WTC11 (cell line): ENCODE measurements at regions of chr2 and their contacts with region 1.

Region 1: GRCh38 chr2:170873035-170873692 is 55.9 kb upstream of the GORASP2 start:
- DNase-seq: peak; percentile 89
- ATAC-seq: peak; percentile 95
- H3K4me3 Mint-ChIP-seq: peak overlapping the region; percentile 52
- H3K27ac Mint-ChIP-seq: no peak overlapping the region
- H3K4me1 Mint-ChIP-seq: peaks cover 8% of the 10 kb centered on the region
- H3K27me3 Mint-ChIP-seq: no peaks in the 10 kb centered on the region
- CTCF ChIP-seq: peak; percentile 87; the same call in 1 of the 2 replicates

Region 2: GRCh38 chr2:170822290-170823087 is 50.7 kb before region 1 on chr2:
- CTCF ChIA-PET with region 1: interaction called, 12 read pairs
- POLR2A ChIA-PET with region 1: no interaction called
- DNase-seq: peak; percentile 69
- ATAC-seq: peak; percentile 5
- H3K4me3 Mint-ChIP-seq: peak overlapping the region; percentile 84
- H3K27ac Mint-ChIP-seq: no peak overlapping the region
- H3K4me1 Mint-ChIP-seq: peaks cover 49% of the 10 kb centered on the region
- H3K27me3 Mint-ChIP-seq: peaks cover 98% of the 10 kb centered on the region
- CTCF ChIP-seq: peak; percentile 18; the same call in 1 of the 2 replicates

Region 3: DNA sequence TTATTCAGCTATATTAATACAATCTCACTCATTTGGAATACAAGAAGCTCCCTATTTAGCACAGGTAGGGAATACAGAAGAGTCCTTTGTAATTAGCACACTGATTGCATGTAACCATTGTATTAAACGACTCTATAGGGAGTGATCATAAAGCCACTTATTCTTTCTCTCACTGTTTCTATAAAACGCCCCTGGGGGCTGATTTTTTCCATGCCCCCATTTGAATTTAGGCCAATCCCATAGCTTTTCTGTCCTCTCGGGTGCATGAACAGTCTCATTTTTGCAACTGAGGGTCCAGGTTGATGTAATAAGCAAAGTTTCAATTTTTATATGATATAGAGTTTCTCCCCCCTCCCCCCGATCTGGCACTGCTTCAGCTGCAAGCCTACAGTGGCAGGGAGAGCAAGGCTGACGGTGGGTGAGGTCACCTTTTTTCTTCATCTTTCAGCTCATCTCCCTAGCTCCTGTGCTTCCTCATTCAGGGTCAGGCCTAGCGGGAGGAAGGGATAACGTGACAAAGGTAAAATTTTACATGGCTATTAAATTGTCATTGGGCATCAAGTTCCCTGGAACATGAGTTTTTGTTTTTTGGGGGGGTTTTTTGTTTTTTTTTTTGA is 10.8 kb before region 1 on chr2:
- CTCF ChIA-PET with region 1: interaction called, 10 read pairs
- POLR2A ChIA-PET with region 1: interaction called, 3 read pairs
- DNase-seq: no peak
- ATAC-seq: no peak
- H3K4me3 Mint-ChIP-seq: no peak overlapping the region
- H3K27ac Mint-ChIP-seq: no peak overlapping the region
- H3K4me1 Mint-ChIP-seq: no peaks in the 10 kb centered on the region
- H3K27me3 Mint-ChIP-seq: peaks cover 4% of the 10 kb centered on the region; the same call in 1 of the 2 replicates
- CTCF ChIP-seq: no peak

Region 4: GRCh38 chr2:170895023-170895757 is 22.0 kb after region 1 on chr2:
- CTCF ChIA-PET with region 1: interaction called, 18 read pairs
- POLR2A ChIA-PET with region 1: no interaction called
- DNase-seq: no peak
- ATAC-seq: no peak
- H3K4me3 Mint-ChIP-seq: no peak overlapping the region
- H3K27ac Mint-ChIP-seq: no peak overlapping the region
- H3K4me1 Mint-ChIP-seq: peaks cover 11% of the 10 kb centered on the region
- H3K27me3 Mint-ChIP-seq: no peaks in the 10 kb centered on the region
- CTCF ChIP-seq: no peak